ENCODE measurements at regions of chr19 and their contacts with region 1.

Region 1: GRCh38 chr19:52922841-52923777 is at the start of gene ZNF888:
- DNase-seq: peak; percentile 96
- ATAC-seq: peak; percentile 100
- H3K4me3 Mint-ChIP-seq: peak within 1 kb of the TSS; percentile 89
- H3K27ac Mint-ChIP-seq: peak within 1 kb of the TSS; percentile 94
- H3K4me1 Mint-ChIP-seq: peaks cover 23% of the 10 kb centered on the region
- H3K27me3 Mint-ChIP-seq: no peaks in the 10 kb centered on the region
- total RNA-seq, gene ZNF888: 5.1 to 5.5 TPM

Region 2: GRCh38 chr19:52690369-52691214 is 232.5 kb before region 1 on chr19:
- CTCF ChIA-PET with region 1: no interaction called
- POLR2A ChIA-PET with region 1: no interaction called
- intact Hi-C with region 1: loop called in 1 of 2 experiments (anchors 1 kb)
- DNase-seq: peak; percentile 96
- ATAC-seq: peak; percentile 95
- H3K4me3 Mint-ChIP-seq: peak overlapping the region; percentile 90
- H3K27ac Mint-ChIP-seq: peak overlapping the region; percentile 96
- H3K4me1 Mint-ChIP-seq: peaks cover 27% of the 10 kb centered on the region
- H3K27me3 Mint-ChIP-seq: no peaks in the 10 kb centered on the region

Region 3: DNA sequence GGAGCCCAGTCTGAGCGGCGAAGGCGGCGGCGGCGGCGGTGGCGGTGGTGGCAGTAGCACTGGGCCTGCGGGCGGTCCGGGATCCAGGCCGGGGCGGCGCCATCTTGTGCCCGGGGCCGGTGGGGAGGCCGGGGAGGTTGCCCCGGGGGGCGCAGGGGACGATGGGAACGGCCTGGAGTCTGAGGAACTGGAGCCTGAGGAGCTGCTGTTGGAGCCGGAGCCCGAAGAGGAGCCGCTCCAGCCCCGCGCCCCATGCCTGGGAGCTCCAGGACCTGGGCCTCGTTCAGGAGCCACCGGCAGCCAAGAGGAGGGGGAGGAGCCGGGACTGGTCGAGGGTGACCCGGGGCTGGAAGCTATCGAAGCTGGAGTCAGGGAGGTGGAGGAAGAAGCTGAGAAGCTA is 113.3 kb before region 1 on chr19:
- CTCF ChIA-PET with region 1: no interaction called
- POLR2A ChIA-PET with region 1: no interaction called
- intact Hi-C with region 1: no loop called
- DNase-seq: no peak
- ATAC-seq: no peak
- H3K4me3 Mint-ChIP-seq: no peak overlapping the region
- H3K27ac Mint-ChIP-seq: no peak overlapping the region
- H3K4me1 Mint-ChIP-seq: no peaks in the 10 kb centered on the region
- H3K27me3 Mint-ChIP-seq: no peaks in the 10 kb centered on the region

Region 4: DNA sequence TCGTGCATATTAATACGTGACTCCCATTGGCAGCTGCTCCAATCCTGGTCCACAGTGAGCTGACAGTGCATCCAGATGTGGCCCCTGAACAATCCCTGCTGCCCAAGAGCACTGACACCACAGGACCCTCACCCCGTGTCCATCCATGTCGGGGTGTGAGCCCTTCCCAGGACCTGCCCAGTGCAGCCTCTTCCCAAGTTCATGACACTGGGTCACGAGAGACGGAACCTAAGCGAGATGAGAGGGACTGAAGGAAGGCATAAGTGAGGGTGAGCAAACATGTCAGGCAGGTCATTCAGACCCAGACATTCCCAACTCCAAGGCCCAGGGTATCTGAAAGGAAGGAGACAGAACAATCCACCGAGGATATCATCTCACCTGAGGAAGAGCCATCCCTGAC is 69.2 kb before region 1 on chr19:
- CTCF ChIA-PET with region 1: no interaction called
- POLR2A ChIA-PET with region 1: no interaction called
- intact Hi-C with region 1: loop called in 1 of 2 experiments (anchors 1 kb)
- DNase-seq: no peak
- ATAC-seq: no peak
- H3K4me3 Mint-ChIP-seq: no peak overlapping the region
- H3K27ac Mint-ChIP-seq: no peak overlapping the region
- H3K4me1 Mint-ChIP-seq: peaks cover 23% of the 10 kb centered on the region
- H3K27me3 Mint-ChIP-seq: no peaks in the 10 kb centered on the region

Region 5: GRCh38 chr19:52981329-52981728 is 58.2 kb after region 1 on chr19:
- CTCF ChIA-PET with region 1: no interaction called
- POLR2A ChIA-PET with region 1: no interaction called
- intact Hi-C with region 1: no loop called
- DNase-seq: no peak
- ATAC-seq: no peak
- H3K4me3 Mint-ChIP-seq: no peak overlapping the region
- H3K27ac Mint-ChIP-seq: no peak overlapping the region
- H3K4me1 Mint-ChIP-seq: no peaks in the 10 kb centered on the region
- H3K27me3 Mint-ChIP-seq: no peaks in the 10 kb centered on the region

Region 6: DNA sequence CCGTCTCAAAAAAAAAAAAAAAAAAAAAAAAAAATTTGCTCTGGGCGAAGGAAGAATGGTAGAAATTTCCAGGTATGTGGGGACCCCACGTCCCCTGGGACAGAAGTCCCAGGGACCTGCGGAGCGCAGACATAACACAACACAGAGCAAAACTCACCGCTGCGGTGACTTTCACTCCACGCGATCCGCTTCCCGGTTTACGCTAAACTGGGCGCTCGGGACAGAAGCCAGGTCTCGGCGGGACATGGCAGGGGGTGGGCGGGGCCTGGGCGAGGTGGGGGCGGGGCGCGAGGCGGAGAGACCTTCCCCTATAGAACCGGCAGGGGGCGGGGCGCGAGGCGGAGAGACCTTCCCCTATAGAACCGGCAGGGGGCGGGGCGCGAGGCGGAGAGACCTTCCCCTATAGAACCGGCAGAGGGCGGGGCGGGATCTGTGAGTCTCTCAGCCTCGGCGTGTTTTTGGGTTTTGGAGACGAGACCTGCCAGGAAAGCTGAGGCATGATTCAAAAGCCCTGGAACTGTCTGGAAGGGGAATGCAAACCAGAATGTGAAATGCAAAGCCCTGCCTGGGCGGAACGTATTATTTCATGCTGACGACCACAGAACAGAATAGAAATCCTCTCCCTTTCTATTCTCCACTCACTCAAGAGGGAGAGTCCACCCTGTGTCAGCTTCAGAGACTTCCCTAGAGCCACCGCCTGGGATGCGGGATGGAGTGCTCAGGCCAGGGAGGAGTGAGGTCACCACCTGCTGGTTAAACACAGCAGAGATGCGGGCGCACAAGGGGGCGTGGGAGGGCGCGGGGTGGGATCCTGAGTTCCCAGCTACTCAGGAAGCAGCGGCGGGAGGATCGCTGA is 70.4 kb after region 1 on chr19:
- CTCF ChIA-PET with region 1: no interaction called
- POLR2A ChIA-PET with region 1: no interaction called
- intact Hi-C with region 1: loop called in 1 of 2 experiments (anchors 1 kb)
- DNase-seq: peak; percentile 88
- ATAC-seq: peak; percentile 88
- H3K4me3 Mint-ChIP-seq: peak overlapping the region; percentile 72
- H3K27ac Mint-ChIP-seq: no peak overlapping the region
- H3K4me1 Mint-ChIP-seq: peaks cover 15% of the 10 kb centered on the region
- H3K27me3 Mint-ChIP-seq: peaks cover 9% of the 10 kb centered on the region

Region 7: GRCh38 chr19:53132141-53132991 is 209.3 kb after region 1 on chr19 and contains the start of gene ZNF415:
- CTCF ChIA-PET with region 1: no interaction called
- POLR2A ChIA-PET with region 1: no interaction called
- intact Hi-C with region 1: no loop called
- DNase-seq: peak; percentile 89
- ATAC-seq: peak; percentile 94
- H3K4me3 Mint-ChIP-seq: peak within 1 kb of the TSS; percentile 75
- H3K27ac Mint-ChIP-seq: peak within 1 kb of the TSS; percentile 68
- H3K4me1 Mint-ChIP-seq: peaks cover 20% of the 10 kb centered on the region
- H3K27me3 Mint-ChIP-seq: peaks cover 10% of the 10 kb centered on the region
- total RNA-seq, gene ZNF415: 3.2 to 3.3 TPM

Region 8: GRCh38 chr19:53467485-53468262 is 544.6 kb after region 1 on chr19 and contains the start of gene ZNF813:
- CTCF ChIA-PET with region 1: no interaction called
- POLR2A ChIA-PET with region 1: no interaction called
- intact Hi-C with region 1: loop called in 1 of 2 experiments (anchors 5 kb)
- DNase-seq: peak; percentile 98
- ATAC-seq: peak; percentile 98
- H3K4me3 Mint-ChIP-seq: peak within 1 kb of the TSS; percentile 80
- H3K27ac Mint-ChIP-seq: peak within 1 kb of the TSS; percentile 87
- H3K4me1 Mint-ChIP-seq: peaks cover 20% of the 10 kb centered on the region
- H3K27me3 Mint-ChIP-seq: peaks cover 9% of the 10 kb centered on the region
- total RNA-seq, gene ZNF813: 5.8 to 7.4 TPM

Measured in activated CD4-positive, alpha-beta T cell treated with anti-CD3 and anti-CD28 coated beads for 36 hours (primary cell).